Dendritic cell treated with granulocyte-macrophage colony-stimulating factor and Interleukin-4, amounts not matched to agents 40 ng/mL and 50 ng/mL, for 4 days (primary cell): ENCODE measurements at regions of chr4 and their contacts with region 1.

Region 1: DNA sequence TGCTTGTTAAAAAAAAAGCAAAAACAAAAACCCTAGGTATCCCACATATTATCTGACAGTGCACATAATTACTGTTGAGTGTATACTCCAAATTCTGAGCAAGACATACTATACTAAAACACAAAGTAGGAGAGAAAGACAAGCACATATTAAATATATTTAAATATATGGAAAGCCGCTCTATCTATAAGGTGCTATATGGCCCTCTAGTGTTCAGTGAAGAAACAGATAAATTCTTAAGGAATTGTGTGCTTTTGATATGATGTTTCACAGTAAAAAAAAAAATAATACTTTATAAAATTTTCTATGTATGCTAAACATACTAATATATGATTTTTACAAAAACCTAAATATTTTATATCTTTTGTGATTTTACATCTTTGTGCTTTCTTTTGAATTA is 137.8 kb downstream of the FBXW7 start:
- H3K4me3 Mint-ChIP-seq: no peak overlapping the region
- H3K27ac Mint-ChIP-seq: no peak overlapping the region
- H3K4me1 Mint-ChIP-seq: peaks cover 39% of the 10 kb centered on the region
- H3K27me3 Mint-ChIP-seq: no peaks in the 10 kb centered on the region

Region 2: GRCh38 chr4:151760712-151761527 is 637.1 kb before region 1 on chr4 and contains the start of gene GATB:
- intact Hi-C with region 1: loop called (anchors 10 kb)
- H3K4me3 Mint-ChIP-seq: peak within 1 kb of the TSS; percentile 100
- H3K27ac Mint-ChIP-seq: peak within 1 kb of the TSS; percentile 97
- H3K4me1 Mint-ChIP-seq: no peaks in the 10 kb centered on the region
- H3K27me3 Mint-ChIP-seq: peaks cover 34% of the 10 kb centered on the region

Region 3: DNA sequence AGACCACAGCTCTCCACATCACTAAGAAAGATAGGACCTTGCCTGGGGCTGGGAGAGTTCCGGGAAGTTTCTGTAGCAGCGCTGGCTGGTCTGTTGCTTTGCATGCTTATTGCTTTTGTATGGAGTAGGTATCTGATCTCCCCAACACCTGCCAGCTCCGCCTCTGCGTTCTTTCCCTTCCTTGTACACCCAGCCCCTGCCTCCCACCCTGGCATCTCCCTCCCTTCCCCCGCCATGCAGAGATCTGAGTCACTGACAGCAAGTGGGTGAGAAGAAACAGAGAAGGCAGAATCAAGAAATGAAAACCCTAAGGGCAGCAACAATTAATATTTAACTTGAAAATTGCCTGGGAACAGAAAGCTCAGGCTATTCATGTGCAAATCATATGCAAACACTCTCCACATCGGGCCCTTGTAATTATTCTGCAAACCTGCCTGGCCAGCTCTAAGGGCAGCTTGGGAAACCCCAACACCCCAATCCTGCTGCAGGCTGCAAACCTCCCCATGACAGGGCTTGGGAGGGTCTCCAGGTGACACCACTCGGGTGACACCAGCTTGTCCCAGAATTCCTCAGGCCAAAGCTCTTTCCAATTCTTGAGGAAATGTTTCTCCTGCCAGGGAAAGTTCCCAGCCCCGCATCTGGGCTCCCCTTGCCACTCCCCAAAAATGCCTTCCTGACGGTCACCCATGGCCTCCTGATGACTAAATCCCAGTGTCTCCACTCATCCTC is 119.4 kb before region 1 on chr4:
- intact Hi-C with region 1: no loop called
- H3K4me3 Mint-ChIP-seq: no peak overlapping the region
- H3K27ac Mint-ChIP-seq: no peak overlapping the region
- H3K4me1 Mint-ChIP-seq: peaks cover 14% of the 10 kb centered on the region
- H3K27me3 Mint-ChIP-seq: peaks cover 1% of the 10 kb centered on the region